ENCODE measurements at regions of chr5 and their contacts with region 1.

Region 1: GRCh38 chr5:140244525-140245025 is 58.3 kb downstream of the PFDN1 start:
- DNase-seq: peak; percentile 86 to 96 (median 92)
- ATAC-seq: peak; percentile 75 to 86 (median 80)
- H3K4me3 ChIP-seq: no peak overlapping the region
- H3K27ac ChIP-seq: no peak overlapping the region
- H3K4me1 ChIP-seq: peaks cover 24 to 38% (median 29%) of the 10 kb centered on the region in 3 donors
- H3K27me3 ChIP-seq: no peaks in the 10 kb centered on the region
- CTCF ChIP-seq: peak; percentile 76 to 81 (median 77)

Region 2: GRCh38 chr5:140148508-140148907 is 96.1 kb before region 1 on chr5:
- intact Hi-C with region 1: no loop called
- DNase-seq: no peak
- ATAC-seq: no peak
- H3K4me3 ChIP-seq: no peak overlapping the region
- H3K27ac ChIP-seq: no peak overlapping the region
- H3K4me1 ChIP-seq: peaks cover 3 to 10% (median 8%) of the 10 kb centered on the region in 3 donors
- H3K27me3 ChIP-seq: no peaks in the 10 kb centered on the region
- CTCF ChIP-seq: no peak

Region 3: DNA sequence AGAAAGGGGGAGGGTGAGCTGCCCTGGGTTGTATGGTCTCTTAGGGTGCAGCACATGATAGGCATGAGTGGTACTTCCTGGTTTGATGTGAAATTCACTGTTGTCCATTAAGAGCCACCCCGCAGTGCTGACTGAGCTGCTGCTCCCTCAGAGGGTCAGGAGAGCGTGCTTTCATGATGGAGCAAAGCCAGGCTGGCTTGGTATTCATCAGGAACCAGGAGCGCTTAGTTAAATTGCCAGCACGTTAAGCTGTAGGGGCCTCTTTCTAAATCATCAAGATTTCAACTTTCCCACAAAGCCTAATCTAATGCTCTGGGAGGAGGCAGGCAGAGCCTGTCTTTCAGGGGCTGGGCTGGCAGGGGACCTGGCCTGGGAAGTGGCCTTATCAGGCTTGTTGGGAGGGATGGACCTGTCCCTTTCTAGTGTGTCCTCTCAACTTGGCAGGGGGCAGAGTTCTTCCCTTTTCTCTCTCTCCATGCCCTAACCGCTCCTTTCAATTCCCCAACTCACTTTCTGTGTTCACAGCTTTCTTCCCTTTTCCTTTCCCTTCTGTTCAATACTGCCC is 61.7 kb before region 1 on chr5:
- intact Hi-C with region 1: no loop called
- DNase-seq: peak in 1 of 6 donors; percentile 46
- ATAC-seq: peak; percentile 48 to 63 (median 58)
- H3K4me3 ChIP-seq: no peak overlapping the region
- H3K27ac ChIP-seq: peak overlapping the region; percentile 16 to 72 (median 42)
- H3K4me1 ChIP-seq: peaks cover 41 to 56% (median 53%) of the 10 kb centered on the region in 3 donors
- H3K27me3 ChIP-seq: no peaks in the 10 kb centered on the region
- CTCF ChIP-seq: no peak

Region 4: DNA sequence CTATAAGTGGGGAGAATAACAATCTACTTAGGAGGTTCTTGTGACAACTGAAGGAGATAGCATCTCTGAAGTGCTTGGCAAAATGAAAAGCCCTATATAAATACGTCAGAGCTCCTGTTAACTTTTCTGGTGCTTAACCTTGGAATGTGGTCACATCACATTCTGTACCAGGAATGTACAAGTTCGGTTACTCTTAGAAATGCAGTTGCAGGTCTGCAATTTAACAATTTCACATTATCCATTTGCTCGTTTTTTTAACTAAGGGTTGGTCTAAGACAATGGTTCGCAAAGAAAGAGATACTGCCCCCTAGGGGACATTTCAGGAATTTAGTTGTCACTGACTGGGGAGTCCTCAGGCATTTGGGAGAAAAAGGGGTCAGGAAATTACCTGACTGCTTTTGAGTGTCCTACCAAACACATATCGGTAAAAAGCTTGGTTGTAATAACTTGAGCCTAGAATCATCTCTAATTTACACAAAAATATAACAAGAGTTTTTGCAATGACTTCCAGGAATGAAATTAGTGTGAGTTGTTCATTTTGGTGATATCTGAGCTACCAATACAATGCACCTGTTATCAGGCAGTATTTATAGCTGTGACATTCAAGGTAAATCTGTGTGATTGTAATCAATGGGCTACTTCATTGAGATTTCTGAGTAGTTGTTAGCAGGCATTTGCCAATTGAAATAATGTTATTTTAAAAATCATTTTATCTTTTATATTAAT is 107.2 kb after region 1 on chr5:
- intact Hi-C with region 1: loop called in 2 of 3 experiments (anchors 5 kb)
- DNase-seq: peak in 3 of 6 donors; percentile 40 to 59 (median 53)
- ATAC-seq: peak; percentile 61 to 81 (median 78)
- H3K4me3 ChIP-seq: no peak overlapping the region
- H3K27ac ChIP-seq: no peak overlapping the region
- H3K4me1 ChIP-seq: peaks cover 0 to 7% (median 5%) of the 10 kb centered on the region in 3 donors
- H3K27me3 ChIP-seq: no peaks in the 10 kb centered on the region
- CTCF ChIP-seq: peak; percentile 83 to 94 (median 90)

Region 5: DNA sequence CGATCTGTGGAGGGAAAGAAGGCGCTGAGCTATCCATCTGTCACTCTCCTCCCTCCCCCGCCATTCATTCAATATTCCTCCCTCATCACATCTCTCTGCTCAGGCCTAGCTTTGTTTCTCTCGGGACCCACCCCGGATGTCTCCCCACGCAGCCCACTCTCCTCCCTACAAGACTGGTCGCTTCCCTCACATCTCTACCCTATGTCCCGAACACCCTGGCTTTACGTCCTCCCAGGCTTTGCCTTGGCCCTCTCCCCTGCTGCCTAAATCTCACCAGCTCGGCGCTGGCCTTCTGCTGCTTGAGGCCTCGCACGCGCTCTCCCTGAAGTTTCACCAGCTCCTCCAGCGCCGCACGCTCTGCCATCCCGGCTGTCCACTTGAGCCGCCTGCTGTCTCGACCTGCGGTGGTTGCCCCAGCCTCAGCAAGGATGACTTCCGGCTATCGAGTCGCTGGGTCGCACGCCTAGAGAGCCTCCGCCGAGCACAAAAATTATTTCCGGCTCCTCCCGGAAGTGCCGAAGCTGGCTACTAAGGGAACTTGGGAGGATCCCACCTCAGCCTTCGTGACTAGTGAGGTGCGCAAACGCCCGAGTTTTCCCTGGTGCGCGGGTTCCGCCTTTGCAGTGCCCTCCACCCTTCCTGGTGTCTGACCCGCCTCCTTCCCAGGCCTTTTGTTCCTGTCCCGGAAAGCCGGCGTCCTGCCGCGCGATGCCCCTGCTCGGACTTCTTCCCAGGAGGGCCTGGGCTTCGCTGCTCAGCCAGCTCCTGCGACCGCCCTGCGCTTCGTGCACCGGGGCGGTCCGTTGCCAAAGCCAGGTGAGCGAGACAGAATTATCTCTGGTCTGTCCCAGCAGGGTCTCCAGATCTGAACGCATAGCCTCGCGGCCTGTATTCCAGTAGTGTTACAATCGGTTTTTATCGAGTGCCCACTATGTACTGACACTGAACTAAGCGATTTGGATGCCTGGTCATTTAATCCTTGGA is 446.7 kb after region 1 on chr5 and contains the starts of genes HARS1 and HARS2:
- intact Hi-C with region 1: no loop called
- DNase-seq: peak; percentile 82 to 93 (median 88)
- ATAC-seq: peak; percentile 98 to 99 (median 99)
- H3K4me3 ChIP-seq: peak within 1 kb of the TSS; percentile 41 to 92 (median 73)
- H3K27ac ChIP-seq: peak within 1 kb of the TSS; percentile 59 to 79 (median 70)
- H3K4me1 ChIP-seq: peaks cover 0 to 9% (median 9%) of the 10 kb centered on the region in 3 donors
- H3K27me3 ChIP-seq: no peaks in the 10 kb centered on the region
- CTCF ChIP-seq: no peak
- total RNA-seq, gene HARS1: 24.7 to 34.7 (median 30.1) TPM
- total RNA-seq, gene HARS2: 5.9 to 15.9 (median 8.6) TPM

Measured in pancreas (tissue), 10 donors.